GM10248 (cell line): ENCODE measurements at regions of chr16 and their contacts with region 1.

Region 1: GRCh38 chr16:71499775-71500364 is 10.7 kb upstream of the ZNF19 start:
- DNase-seq: peak; percentile 70
- CTCF ChIP-seq: peak; percentile 79

Region 2: DNA sequence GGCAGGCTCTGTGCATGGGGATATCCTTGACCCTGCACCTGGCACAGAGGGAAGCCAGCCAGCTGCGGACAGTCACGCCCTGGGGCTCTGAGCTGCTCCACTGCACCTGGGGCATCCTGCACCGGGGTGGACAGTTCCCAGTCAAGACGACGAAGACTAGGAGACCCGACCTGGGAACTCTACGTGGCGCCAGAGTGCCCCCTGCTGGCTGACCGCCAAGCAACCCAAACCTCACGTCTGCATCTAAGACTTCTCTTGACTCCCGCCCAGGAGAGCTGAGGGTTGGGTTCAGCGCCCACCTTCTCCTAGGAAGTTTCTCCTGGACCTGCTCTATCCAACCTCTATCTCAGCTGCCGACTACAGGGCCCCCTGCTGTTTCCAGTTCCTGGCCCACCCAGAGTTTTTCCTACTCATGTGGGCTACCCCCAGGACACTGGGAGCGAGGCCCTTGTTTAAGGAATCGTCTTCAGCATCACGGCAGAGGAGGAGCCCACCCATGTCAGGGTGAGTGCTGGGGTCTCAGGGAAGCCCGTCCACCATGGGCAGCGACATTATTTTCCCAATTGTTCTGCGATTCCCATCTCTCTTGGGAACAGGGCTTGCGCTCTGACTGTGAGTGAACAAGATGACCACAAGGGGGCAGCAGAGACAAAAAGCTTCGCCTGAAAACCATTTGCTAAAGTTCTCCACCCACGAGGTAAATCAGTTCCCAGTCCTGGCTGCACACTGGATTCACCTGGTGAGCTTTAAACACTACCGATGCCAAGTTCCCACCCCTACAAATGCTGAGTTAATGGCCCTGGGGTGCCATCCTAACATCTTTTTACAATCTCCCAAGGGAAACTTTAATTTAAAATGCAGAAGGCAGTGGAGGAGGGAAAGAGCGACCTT is 87.4 kb before region 1 on chr16:
- CTCF ChIA-PET with region 1: interaction called, 216 read pairs
- POLR2A ChIA-PET with region 1: no interaction called
- DNase-seq: peak; percentile 82
- CTCF ChIP-seq: peak; percentile 89

Region 3: GRCh38 chr16:71461686-71462648 is 37.9 kb before region 1 on chr16 and contains the start of gene ZNF23:
- CTCF ChIA-PET with region 1: interaction called, 27 read pairs
- POLR2A ChIA-PET with region 1: no interaction called
- DNase-seq: peak; percentile 96
- CTCF ChIP-seq: no peak

Region 4: DNA sequence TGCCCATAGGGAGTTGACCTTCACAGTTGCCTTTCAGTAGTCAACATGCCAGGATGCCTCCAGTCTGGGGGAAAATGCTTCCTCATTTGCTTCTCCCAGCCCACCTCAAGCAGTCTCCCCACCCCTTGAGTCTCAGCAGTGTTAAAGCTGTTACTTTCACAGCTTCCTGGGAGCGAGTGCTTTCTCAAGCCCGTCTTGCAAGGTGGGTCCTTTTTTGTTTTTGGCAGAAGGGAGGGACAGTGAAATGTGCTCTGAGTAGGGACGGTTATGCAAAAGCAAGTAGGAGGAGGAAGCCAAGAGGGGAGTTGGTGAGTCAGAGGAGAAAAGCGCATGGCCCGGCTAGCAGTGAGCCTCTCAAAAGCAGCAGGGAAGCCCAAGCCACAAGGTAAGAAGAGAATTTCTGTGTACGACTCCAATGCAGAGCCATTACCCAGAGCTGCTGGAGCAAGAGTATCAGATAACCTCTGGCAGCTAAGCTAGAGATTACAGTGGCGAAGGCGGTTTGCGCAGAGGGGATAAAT is 26.3 kb after region 1 on chr16 and contains the start of gene CHST4:
- CTCF ChIA-PET with region 1: interaction called, 13 read pairs
- POLR2A ChIA-PET with region 1: no interaction called
- DNase-seq: no peak
- CTCF ChIP-seq: no peak

Region 5: GRCh38 chr16:71706046-71706445 is 206.2 kb after region 1 on chr16:
- CTCF ChIA-PET with region 1: no interaction called
- POLR2A ChIA-PET with region 1: no interaction called
- DNase-seq: no peak
- CTCF ChIP-seq: no peak